Psoas muscle (tissue), 8 donors: ENCODE measurements at regions of chr16 and their contacts with region 1.

Region 1: DNA sequence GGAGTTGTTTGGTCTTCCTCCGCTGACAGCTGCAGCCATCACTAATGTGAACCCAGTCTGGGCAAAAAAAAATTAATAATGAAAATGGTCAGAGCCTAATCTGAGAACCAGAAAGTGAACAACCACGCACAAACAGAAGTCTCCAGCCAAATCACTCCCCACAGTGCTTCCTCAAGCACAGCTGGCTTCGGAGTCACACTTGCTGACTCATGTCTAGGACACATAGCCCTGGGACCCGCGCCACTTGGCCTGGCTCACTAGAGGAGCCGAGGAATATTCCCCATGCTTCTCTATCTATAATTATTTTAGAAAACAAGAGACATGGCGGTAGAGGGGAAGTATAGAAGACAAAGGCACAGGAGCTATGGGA is 109.1 kb downstream of the ZFHX3 start:
- DNase-seq: peak; percentile 88 to 96
- ATAC-seq: peak; percentile 89 to 94 (median 92)
- H3K4me3 ChIP-seq: peak overlapping the region; percentile 41
- H3K27ac ChIP-seq: peak overlapping the region; percentile 81
- H3K4me1 ChIP-seq: peaks cover 63% of the 10 kb centered on the region
- H3K27me3 ChIP-seq: no peaks in the 10 kb centered on the region
- CTCF ChIP-seq: no peak

Region 2: DNA sequence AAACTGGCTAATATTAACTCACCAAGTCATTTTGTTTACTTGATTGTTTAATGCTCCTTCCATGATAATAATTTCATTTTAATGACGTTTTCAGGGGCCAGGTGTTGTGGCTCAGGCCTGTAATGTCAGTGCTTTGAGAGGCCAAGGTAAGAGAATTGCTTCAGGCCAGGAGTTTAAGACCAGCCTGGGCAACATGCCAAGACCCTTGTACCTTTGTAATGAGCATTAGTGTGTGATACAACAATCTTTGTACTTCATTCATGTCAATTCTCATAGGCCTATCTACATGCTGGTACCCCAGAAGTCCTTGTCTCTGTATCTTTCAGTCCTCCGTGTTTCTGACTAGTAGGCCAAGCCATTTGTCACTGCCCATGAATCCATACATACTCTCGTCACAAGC is 187.7 kb before region 1 on chr16:
- intact Hi-C with region 1: no loop called
- DNase-seq: no peak
- ATAC-seq: no peak
- H3K4me3 ChIP-seq: no peak overlapping the region
- H3K27ac ChIP-seq: no peak overlapping the region
- H3K4me1 ChIP-seq: no peaks in the 10 kb centered on the region
- H3K27me3 ChIP-seq: no peaks in the 10 kb centered on the region
- CTCF ChIP-seq: no peak

Region 3: DNA sequence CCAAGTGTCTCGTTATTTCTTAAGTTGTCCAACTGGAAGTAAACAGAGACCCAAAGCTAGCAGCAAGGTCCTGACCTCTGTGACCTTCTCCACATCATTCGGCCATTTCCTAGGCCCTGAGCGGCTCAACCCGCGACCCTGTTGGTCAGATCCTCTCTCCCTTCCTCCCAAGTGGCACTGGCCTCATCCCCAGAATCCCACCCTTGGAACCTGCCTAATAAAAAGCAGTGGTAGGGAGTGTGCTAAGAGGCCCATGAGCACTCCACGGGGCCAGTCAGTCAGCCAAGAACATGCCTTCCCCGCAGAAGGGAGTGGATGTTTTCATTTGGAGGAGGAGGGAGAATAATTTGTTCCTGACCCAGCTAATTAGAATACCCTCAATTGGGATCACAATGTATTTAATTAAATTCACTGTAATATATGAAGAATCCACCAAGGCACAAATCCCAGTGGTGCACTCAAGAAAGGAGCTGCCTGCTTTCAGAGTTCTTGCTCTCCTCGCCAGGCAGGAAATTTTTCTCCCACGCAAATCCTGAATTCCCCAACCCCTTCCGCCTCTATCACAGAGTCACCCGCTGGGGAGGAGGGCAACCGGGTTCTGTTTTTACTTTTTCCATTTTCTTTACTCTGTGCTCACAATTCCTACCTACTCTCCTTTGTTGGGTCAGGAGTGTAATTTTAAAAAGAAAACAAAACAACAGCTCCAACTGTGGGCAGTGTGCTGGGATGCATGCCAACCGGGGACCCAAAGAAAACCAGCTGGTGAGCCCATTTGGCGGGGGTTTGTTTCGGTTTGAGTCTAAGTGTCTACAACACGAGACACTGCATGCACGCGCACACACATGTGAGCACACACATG is 44.3 kb before region 1 on chr16:
- intact Hi-C with region 1: loop called in 1 of 2 experiments (anchors 5 kb)
- DNase-seq: no peak
- ATAC-seq: no peak
- H3K4me3 ChIP-seq: no peak overlapping the region
- H3K27ac ChIP-seq: no peak overlapping the region
- H3K4me1 ChIP-seq: peaks cover 36% of the 10 kb centered on the region
- H3K27me3 ChIP-seq: no peaks in the 10 kb centered on the region
- CTCF ChIP-seq: no peak

Region 4: GRCh38 chr16:72901000-72901627 is 37.7 kb before region 1 on chr16:
- intact Hi-C with region 1: loop called in 1 of 2 experiments (anchors 5 kb)
- DNase-seq: no peak
- ATAC-seq: no peak
- H3K4me3 ChIP-seq: no peak overlapping the region
- H3K27ac ChIP-seq: no peak overlapping the region
- H3K4me1 ChIP-seq: peaks cover 10% of the 10 kb centered on the region
- H3K27me3 ChIP-seq: no peaks in the 10 kb centered on the region
- CTCF ChIP-seq: no peak

Region 5: GRCh38 chr16:72989579-72990551 is 51.1 kb after region 1 on chr16:
- intact Hi-C with region 1: loop called (anchors 5 kb)
- DNase-seq: peak; percentile 86 to 95
- ATAC-seq: peak; percentile 75 to 82 (median 78)
- H3K4me3 ChIP-seq: peak overlapping the region; percentile 61
- H3K27ac ChIP-seq: peak overlapping the region; percentile 97
- H3K4me1 ChIP-seq: peaks cover 78% of the 10 kb centered on the region
- H3K27me3 ChIP-seq: no peaks in the 10 kb centered on the region
- CTCF ChIP-seq: no peak

Region 6: GRCh38 chr16:73047518-73048291 is 108.9 kb after region 1 on chr16 and contains the start of gene ZFHX3:
- intact Hi-C with region 1: loop called in 1 of 2 experiments (anchors 2 kb)
- DNase-seq: peak; percentile 81 to 92
- ATAC-seq: peak; percentile 66 to 75 (median 72)
- H3K4me3 ChIP-seq: peak within 1 kb of the TSS; percentile 84
- H3K27ac ChIP-seq: peak within 1 kb of the TSS; percentile 98
- H3K4me1 ChIP-seq: peaks cover 77% of the 10 kb centered on the region
- H3K27me3 ChIP-seq: no peaks in the 10 kb centered on the region
- CTCF ChIP-seq: no peak
- total RNA-seq, gene ZFHX3: 10.6 to 36.9 (median 26.2) TPM

Region 7: GRCh38 chr16:73196670-73197069 is 257.9 kb after region 1 on chr16:
- intact Hi-C with region 1: loop called in 1 of 2 experiments (anchors 10 kb)
- DNase-seq: peak; percentile 63 to 80
- ATAC-seq: peak; percentile 89 to 95 (median 90)
- H3K4me3 ChIP-seq: no peak overlapping the region
- H3K27ac ChIP-seq: no peak overlapping the region
- H3K4me1 ChIP-seq: no peaks in the 10 kb centered on the region
- H3K27me3 ChIP-seq: peaks cover 0 to 2% (median 0%) of the 10 kb centered on the region in 3 donors
- CTCF ChIP-seq: peak; percentile 75

Region 8: GRCh38 chr16:73601911-73602310 is 663.1 kb after region 1 on chr16:
- intact Hi-C with region 1: no loop called
- DNase-seq: no peak
- ATAC-seq: no peak
- H3K4me3 ChIP-seq: no peak overlapping the region
- H3K27ac ChIP-seq: no peak overlapping the region
- H3K4me1 ChIP-seq: no peaks in the 10 kb centered on the region
- H3K27me3 ChIP-seq: no peaks in the 10 kb centered on the region
- CTCF ChIP-seq: no peak